Common myeloid progenitor, CD34-positive (primary cell): ENCODE measurements at regions of chr2 and their contacts with region 1.

Region 1: GRCh38 chr2:218466016-218466521 is 47.1 kb downstream of the VIL1 start:
- DNase-seq: peak; percentile 18 to 37 (median 25)
- H3K4me3 ChIP-seq: no peak overlapping the region
- H3K27ac ChIP-seq: no peak overlapping the region
- H3K4me1 ChIP-seq: peaks cover 0 to 2% (median under 1%) of the 10 kb centered on the region in 4 experiments
- H3K27me3 ChIP-seq: no peaks in the 10 kb centered on the region

Region 2: GRCh38 chr2:218275371-218276072 is 190.5 kb before region 1 on chr2:
- CTCF ChIA-PET with region 1: interaction called, 18 read pairs
- POLR2A ChIA-PET with region 1: no interaction called
- DNase-seq: no peak
- H3K4me3 ChIP-seq: no peak overlapping the region
- H3K27ac ChIP-seq: peak overlapping the region in 1 of 2 experiments; percentile 51
- H3K4me1 ChIP-seq: peaks cover 5 to 24% (median 18%) of the 10 kb centered on the region in 4 experiments
- H3K27me3 ChIP-seq: no peaks in the 10 kb centered on the region

Region 3: GRCh38 chr2:218406209-218406948 is 59.7 kb before region 1 on chr2:
- CTCF ChIA-PET with region 1: interaction called, 27 read pairs
- POLR2A ChIA-PET with region 1: interaction called, 4 read pairs
- DNase-seq: peak; percentile 93 to 97 (median 95)
- H3K4me3 ChIP-seq: peak overlapping the region; percentile 21 to 77 (median 59)
- H3K27ac ChIP-seq: peak overlapping the region; percentile 33 to 70
- H3K4me1 ChIP-seq: peaks cover 5 to 62% (median 55%) of the 10 kb centered on the region in 4 experiments
- H3K27me3 ChIP-seq: no peaks in the 10 kb centered on the region

Region 4: GRCh38 chr2:218448934-218449333 is 17.1 kb before region 1 on chr2:
- CTCF ChIA-PET with region 1: interaction called, 10 read pairs
- POLR2A ChIA-PET with region 1: interaction called, 3 read pairs
- DNase-seq: no peak
- H3K4me3 ChIP-seq: no peak overlapping the region
- H3K27ac ChIP-seq: no peak overlapping the region
- H3K4me1 ChIP-seq: no peaks in the 10 kb centered on the region
- H3K27me3 ChIP-seq: no peaks in the 10 kb centered on the region